ENCODE measurements at regions of chr18 and their contacts with region 1.

Region 1: GRCh38 chr18:3579701-3580100 is 129.7 kb downstream of the TGIF1 start:
- DNase-seq: no peak
- ATAC-seq: no peak
- H3K4me3 ChIP-seq: no peak overlapping the region
- H3K27ac ChIP-seq: no peak overlapping the region
- H3K4me1 ChIP-seq: no peaks in the 10 kb centered on the region
- H3K27me3 ChIP-seq: no peaks in the 10 kb centered on the region
- CTCF ChIP-seq: no peak
- POLR2A ChIP-seq: no peak

Region 2: GRCh38 chr18:3093624-3094337 is 485.9 kb before region 1 on chr18:
- intact Hi-C with region 1: no loop called
- DNase-seq: peak in 2 of 5 donors; percentile 35 to 39
- ATAC-seq: peak in 2 of 4 donors; percentile 12 to 38
- H3K4me3 ChIP-seq: no peak overlapping the region
- H3K27ac ChIP-seq: peak overlapping the region in 2 of 12 donors; percentile 26 to 27
- H3K4me1 ChIP-seq: peaks cover 0 to 26% (median 5%) of the 10 kb centered on the region in 12 donors
- H3K27me3 ChIP-seq: no peaks in the 10 kb centered on the region
- CTCF ChIP-seq: no peak
- POLR2A ChIP-seq: no peak

Region 3: GRCh38 chr18:3466045-3466444 is 113.7 kb before region 1 on chr18:
- intact Hi-C with region 1: loop called in 1 of 10 experiments (anchors 5 kb)
- DNase-seq: peak in 1 of 5 donors; percentile 35
- ATAC-seq: peak in 3 of 4 donors; percentile 55 to 84 (median 59)
- H3K4me3 ChIP-seq: peak overlapping the region in 3 of 12 donors; percentile 0 to 15 (median 8)
- H3K27ac ChIP-seq: peak overlapping the region in 3 of 12 donors; percentile 19 to 53 (median 35)
- H3K4me1 ChIP-seq: peaks cover 0 to 18% (median 7%) of the 10 kb centered on the region in 12 donors
- H3K27me3 ChIP-seq: no peaks in the 10 kb centered on the region
- CTCF ChIP-seq: no peak
- POLR2A ChIP-seq: no peak

Region 4: GRCh38 chr18:3513481-3513880 is 66.2 kb before region 1 on chr18:
- intact Hi-C with region 1: no loop called
- DNase-seq: no peak
- ATAC-seq: no peak
- H3K4me3 ChIP-seq: no peak overlapping the region
- H3K27ac ChIP-seq: no peak overlapping the region
- H3K4me1 ChIP-seq: peaks cover 0 to 5% (median 0%) of the 10 kb centered on the region in 12 donors
- H3K27me3 ChIP-seq: no peaks in the 10 kb centered on the region
- CTCF ChIP-seq: no peak
- POLR2A ChIP-seq: no peak

Region 5: DNA sequence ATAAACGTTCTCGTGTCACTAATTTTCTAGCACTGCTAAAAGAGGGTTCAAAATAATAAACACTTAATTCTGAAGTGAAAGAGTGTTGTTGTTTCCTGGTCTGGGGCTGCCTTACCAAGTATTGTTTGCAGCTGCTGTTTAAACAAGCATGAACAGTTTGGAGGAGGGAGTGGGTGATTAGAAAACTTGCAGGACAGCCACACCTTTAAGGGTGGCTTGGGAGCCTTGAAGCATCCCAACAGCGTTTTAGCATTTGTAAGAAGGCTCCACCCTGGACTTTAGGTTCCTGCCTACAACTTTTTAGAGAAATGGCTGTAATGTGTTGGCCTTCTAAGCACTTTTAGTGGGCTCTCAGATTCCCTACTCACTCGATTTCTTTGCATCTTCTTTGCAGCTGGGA is 241.8 kb after region 1 on chr18:
- intact Hi-C with region 1: no loop called
- DNase-seq: no peak
- ATAC-seq: no peak
- H3K4me3 ChIP-seq: no peak overlapping the region
- H3K27ac ChIP-seq: no peak overlapping the region
- H3K4me1 ChIP-seq: no peaks in the 10 kb centered on the region
- H3K27me3 ChIP-seq: no peaks in the 10 kb centered on the region
- CTCF ChIP-seq: no peak
- POLR2A ChIP-seq: no peak